PC-9 (cell line): ENCODE measurements at regions of chr1 and their contacts with region 1.

Region 1: GRCh38 chr1:20974069-20974468 is 187.0 kb upstream of the HP1BP3 start:
- DNase-seq: no peak
- H3K4me3 ChIP-seq: no peak overlapping the region
- H3K27ac ChIP-seq: no peak overlapping the region
- H3K4me1 ChIP-seq: no peaks in the 10 kb centered on the region
- H3K27me3 ChIP-seq: no peaks in the 10 kb centered on the region
- CTCF ChIP-seq: no peak

Region 2: GRCh38 chr1:20997602-20998224 is 23.6 kb after region 1 on chr1:
- CTCF ChIA-PET with region 1: no interaction called
- POLR2A ChIA-PET with region 1: interaction called, 10 read pairs
- intact Hi-C with region 1: no loop called
- DNase-seq: no peak
- H3K4me3 ChIP-seq: no peak overlapping the region
- H3K27ac ChIP-seq: no peak overlapping the region
- H3K4me1 ChIP-seq: no peaks in the 10 kb centered on the region
- H3K27me3 ChIP-seq: no peaks in the 10 kb centered on the region
- CTCF ChIP-seq: no peak

Region 3: GRCh38 chr1:21058035-21058793 is 84.1 kb after region 1 on chr1:
- CTCF ChIA-PET with region 1: no interaction called
- POLR2A ChIA-PET with region 1: no interaction called
- intact Hi-C with region 1: no loop called
- DNase-seq: no peak
- H3K4me3 ChIP-seq: no peak overlapping the region
- H3K27ac ChIP-seq: no peak overlapping the region
- H3K4me1 ChIP-seq: no peaks in the 10 kb centered on the region
- H3K27me3 ChIP-seq: no peaks in the 10 kb centered on the region
- CTCF ChIP-seq: no peak

Region 4: DNA sequence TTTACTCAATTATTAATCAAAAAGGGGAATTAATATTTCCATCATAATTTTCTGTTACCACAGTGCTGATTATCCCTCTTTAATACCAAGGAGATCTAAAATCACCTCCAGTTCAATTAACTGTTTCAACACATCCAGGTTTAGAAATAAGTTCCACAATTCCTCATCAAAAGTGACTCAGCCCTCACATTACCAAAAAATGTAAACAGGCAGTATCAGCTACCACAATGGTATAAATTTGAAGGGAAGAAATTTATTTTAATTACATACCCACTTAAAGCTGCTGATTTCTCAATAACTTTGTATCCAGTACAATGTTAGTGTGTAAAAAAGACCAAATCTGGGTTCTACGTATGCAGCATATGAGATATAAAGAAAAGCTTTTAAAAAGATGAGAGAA is 150.8 kb after region 1 on chr1:
- CTCF ChIA-PET with region 1: no interaction called
- POLR2A ChIA-PET with region 1: no interaction called
- intact Hi-C with region 1: no loop called
- DNase-seq: no peak
- H3K4me3 ChIP-seq: no peak overlapping the region
- H3K27ac ChIP-seq: no peak overlapping the region
- H3K4me1 ChIP-seq: no peaks in the 10 kb centered on the region
- H3K27me3 ChIP-seq: no peaks in the 10 kb centered on the region
- CTCF ChIP-seq: no peak